ENCODE measurements at regions of chr4 and their contacts with region 1.

Region 1: GRCh38 chr4:107913281-107913899 is 18.0 kb upstream of the CYP2U1 start:
- DNase-seq: peak; percentile 74
- H3K4me3 ChIP-seq: no peak overlapping the region
- H3K27ac ChIP-seq: no peak overlapping the region
- H3K4me1 ChIP-seq: no peaks in the 10 kb centered on the region
- H3K27me3 ChIP-seq: no peaks in the 10 kb centered on the region
- CTCF ChIP-seq: peak; percentile 82

Region 2: GRCh38 chr4:107757864-107758476 is 155.4 kb before region 1 on chr4:
- CTCF ChIA-PET with region 1: no interaction called
- POLR2A ChIA-PET with region 1: no interaction called
- intact Hi-C with region 1: loop called (anchors 1 kb)
- DNase-seq: peak; percentile 60
- H3K4me3 ChIP-seq: no peak overlapping the region
- H3K27ac ChIP-seq: no peak overlapping the region
- H3K4me1 ChIP-seq: no peaks in the 10 kb centered on the region
- H3K27me3 ChIP-seq: no peaks in the 10 kb centered on the region
- CTCF ChIP-seq: peak; percentile 67; the same call in 1 of the 2 replicates

Measured in A673 (cell line).